IMR-90 (cell line): ENCODE measurements at regions of chr3 and their contacts with region 1.

Region 1: DNA sequence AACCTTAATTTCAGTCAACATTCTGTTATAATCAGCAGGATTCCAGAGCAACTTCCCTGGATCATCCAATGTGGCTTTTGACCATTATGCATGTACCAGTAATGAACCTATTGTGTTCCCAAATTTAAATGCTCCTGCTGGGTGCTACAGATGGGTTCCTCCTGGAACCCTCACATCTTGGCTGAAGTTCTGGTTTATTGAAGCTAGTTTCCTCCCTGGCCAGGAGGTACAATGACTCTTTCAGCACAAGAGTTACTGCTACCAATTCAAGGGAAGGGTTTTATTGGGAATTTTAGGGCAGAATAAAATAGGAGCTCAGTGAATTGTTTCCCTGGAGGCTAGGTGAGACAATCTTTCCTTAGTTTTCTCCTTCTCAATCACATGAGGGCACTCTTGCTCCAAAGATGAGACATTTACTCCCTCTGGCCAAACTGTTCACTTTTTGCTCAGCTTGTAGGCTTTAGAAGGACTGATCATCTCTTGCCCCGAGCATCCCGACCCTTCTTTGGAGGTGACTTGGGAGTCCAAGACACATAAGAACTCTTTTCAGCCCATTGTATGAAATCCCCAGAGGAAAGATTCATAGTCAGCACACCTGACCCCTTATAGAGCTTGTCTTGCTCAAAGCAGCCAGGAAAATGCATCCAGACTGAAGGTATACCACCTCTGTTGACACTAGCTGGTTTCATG is 8.8 kb upstream of the NPHP3 start:
- DNase-seq: peak; percentile 57
- ATAC-seq: peak; percentile 94
- H3K4me3 ChIP-seq: no peak overlapping the region
- H3K27ac ChIP-seq: no peak overlapping the region
- H3K4me1 ChIP-seq: no peaks in the 10 kb centered on the region
- H3K27me3 ChIP-seq: peaks cover 6% of the 10 kb centered on the region
- CTCF ChIP-seq: peak; percentile 67
- POLR2A ChIP-seq: no peak
- RAD21 ChIP-seq: peak; percentile 80

Region 2: GRCh38 chr3:133040696-133041523 is 309.9 kb after region 1 on chr3:
- CTCF ChIA-PET with region 1: interaction called, 4 read pairs
- POLR2A ChIA-PET with region 1: no interaction called
- dilution Hi-C with region 1: no loop called
- in situ Hi-C with region 1: loop called (anchors 25 kb)
- intact Hi-C with region 1: loop called (anchors 1 kb)
- DNase-seq: peak; percentile 71
- ATAC-seq: peak; percentile 92
- H3K4me3 ChIP-seq: no peak overlapping the region
- H3K27ac ChIP-seq: no peak overlapping the region
- H3K4me1 ChIP-seq: no peaks in the 10 kb centered on the region
- H3K27me3 ChIP-seq: peaks cover 21% of the 10 kb centered on the region
- CTCF ChIP-seq: peak; percentile 91
- POLR2A ChIP-seq: no peak
- RAD21 ChIP-seq: peak; percentile 94

Region 3: GRCh38 chr3:133152056-133152455 is 421.0 kb after region 1 on chr3:
- CTCF ChIA-PET with region 1: no interaction called
- POLR2A ChIA-PET with region 1: no interaction called
- dilution Hi-C with region 1: no loop called
- in situ Hi-C with region 1: no loop called
- intact Hi-C with region 1: no loop called
- DNase-seq: no peak
- ATAC-seq: no peak
- H3K4me3 ChIP-seq: no peak overlapping the region
- H3K27ac ChIP-seq: no peak overlapping the region
- H3K4me1 ChIP-seq: no peaks in the 10 kb centered on the region
- H3K27me3 ChIP-seq: no peaks in the 10 kb centered on the region
- CTCF ChIP-seq: no peak
- POLR2A ChIP-seq: no peak
- RAD21 ChIP-seq: no peak

Region 4: GRCh38 chr3:133276594-133276993 is 545.6 kb after region 1 on chr3:
- CTCF ChIA-PET with region 1: no interaction called
- POLR2A ChIA-PET with region 1: no interaction called
- dilution Hi-C with region 1: no loop called
- in situ Hi-C with region 1: no loop called
- intact Hi-C with region 1: loop called (anchors 5 kb)
- DNase-seq: no peak
- ATAC-seq: no peak
- H3K4me3 ChIP-seq: no peak overlapping the region
- H3K27ac ChIP-seq: no peak overlapping the region
- H3K4me1 ChIP-seq: peaks cover 9% of the 10 kb centered on the region
- H3K27me3 ChIP-seq: no peaks in the 10 kb centered on the region
- CTCF ChIP-seq: no peak
- POLR2A ChIP-seq: no peak
- RAD21 ChIP-seq: no peak

Region 5: GRCh38 chr3:133377396-133377795 is 646.4 kb after region 1 on chr3:
- CTCF ChIA-PET with region 1: interaction called, 6 read pairs
- POLR2A ChIA-PET with region 1: no interaction called
- dilution Hi-C with region 1: no loop called
- in situ Hi-C with region 1: no loop called
- intact Hi-C with region 1: loop called (anchors 2 kb)
- DNase-seq: peak; percentile 69
- ATAC-seq: peak; percentile 90
- H3K4me3 ChIP-seq: no peak overlapping the region
- H3K27ac ChIP-seq: no peak overlapping the region
- H3K4me1 ChIP-seq: no peaks in the 10 kb centered on the region
- H3K27me3 ChIP-seq: no peaks in the 10 kb centered on the region
- CTCF ChIP-seq: peak; percentile 70
- POLR2A ChIP-seq: no peak
- RAD21 ChIP-seq: peak; percentile 84

Region 6: DNA sequence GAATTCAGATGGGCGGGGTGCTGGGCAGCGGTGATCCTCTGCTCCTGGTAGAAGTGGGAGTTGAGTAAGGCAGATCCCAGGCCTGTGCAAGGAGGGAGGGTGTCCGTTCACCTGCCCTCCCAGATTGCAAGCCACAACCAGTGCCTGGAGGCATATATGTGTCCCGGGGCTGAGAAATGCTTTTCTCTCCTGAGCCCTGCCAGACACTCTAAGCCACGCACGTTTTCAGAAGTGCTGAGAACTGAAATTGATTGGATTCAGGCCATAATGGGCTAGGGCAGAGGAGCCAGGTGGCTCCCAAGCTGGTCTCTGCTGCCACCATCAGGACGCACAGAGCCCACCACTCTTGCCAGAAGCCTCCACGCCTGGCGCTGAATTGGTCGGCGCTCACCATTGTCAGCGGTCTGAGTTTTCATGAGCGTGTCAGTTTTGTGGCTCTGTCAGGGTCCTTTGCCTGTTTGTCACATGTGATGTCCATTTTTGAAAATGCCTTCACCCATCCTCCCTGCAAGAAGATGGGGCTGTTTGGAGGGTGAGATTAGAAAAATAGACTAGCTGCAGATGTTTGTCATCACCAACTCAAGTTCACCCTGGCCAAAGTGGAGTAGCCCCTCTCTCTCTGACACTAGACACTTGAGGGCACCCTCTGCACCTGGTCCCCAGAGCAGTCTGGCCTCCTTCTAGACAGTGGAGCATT is 653.4 kb after region 1 on chr3:
- CTCF ChIA-PET with region 1: interaction called, 6 read pairs
- POLR2A ChIA-PET with region 1: no interaction called
- dilution Hi-C with region 1: no loop called
- in situ Hi-C with region 1: loop called (anchors 5 kb)
- intact Hi-C with region 1: loop called (anchors 2 kb)
- DNase-seq: peak; percentile 65
- ATAC-seq: peak; percentile 95
- H3K4me3 ChIP-seq: no peak overlapping the region
- H3K27ac ChIP-seq: no peak overlapping the region
- H3K4me1 ChIP-seq: 0 out of 2 replicates have a peak, but pooled peaks cover 2% of the 10 kb centered on the region
- H3K27me3 ChIP-seq: no peaks in the 10 kb centered on the region
- CTCF ChIP-seq: peak; percentile 82
- POLR2A ChIP-seq: no peak
- RAD21 ChIP-seq: peak; percentile 92

Region 7: GRCh38 chr3:133426721-133427120 is 695.7 kb after region 1 on chr3:
- CTCF ChIA-PET with region 1: interaction called, 6 read pairs
- POLR2A ChIA-PET with region 1: no interaction called
- dilution Hi-C with region 1: no loop called
- in situ Hi-C with region 1: loop called (anchors 10 kb)
- intact Hi-C with region 1: loop called (anchors 1 kb)
- DNase-seq: peak; percentile 86
- ATAC-seq: peak; percentile 61
- H3K4me3 ChIP-seq: no peak overlapping the region
- H3K27ac ChIP-seq: no peak overlapping the region
- H3K4me1 ChIP-seq: peaks cover 2% of the 10 kb centered on the region; the same call in 1 of the 2 replicates
- H3K27me3 ChIP-seq: peaks cover 3% of the 10 kb centered on the region
- CTCF ChIP-seq: no peak
- POLR2A ChIP-seq: no peak
- RAD21 ChIP-seq: no peak